ENCODE measurements at regions of chr19 and their contacts with region 1.

Region 1: DNA sequence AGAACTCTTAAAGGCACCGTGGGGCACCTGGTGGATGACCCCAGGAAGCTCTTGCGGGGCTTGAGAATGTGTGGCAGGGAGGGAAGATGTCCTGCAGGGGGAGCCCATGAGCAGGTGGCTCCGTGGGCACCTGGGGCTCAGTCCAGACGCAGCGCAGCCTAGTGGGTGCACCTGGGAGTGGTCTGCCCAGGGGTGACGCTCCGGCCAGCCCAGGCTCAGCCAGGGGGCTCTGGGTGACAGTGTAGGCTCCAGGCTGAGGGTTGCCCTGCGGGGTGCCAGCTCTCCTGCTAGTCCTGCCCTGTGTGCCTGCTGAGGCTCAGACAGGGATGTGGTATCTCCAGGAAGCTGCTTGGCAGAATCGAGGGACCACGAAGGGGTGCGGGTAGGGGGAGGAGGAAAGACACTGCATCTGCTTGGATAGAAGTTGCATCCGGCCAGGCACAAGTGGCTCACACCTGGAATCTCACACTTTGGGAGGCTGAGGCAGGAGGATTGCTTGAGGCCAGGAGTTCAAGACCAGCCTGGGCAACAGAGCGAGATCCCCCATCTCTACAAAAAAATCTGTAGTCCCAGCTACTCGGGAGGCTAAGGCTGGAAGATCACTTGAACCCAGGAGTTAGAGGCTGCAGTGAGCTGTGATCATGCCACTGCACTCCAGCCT is 15.0 kb upstream of the PGLS start:
- DNase-seq: peak; percentile 88
- ATAC-seq: peak; percentile 99
- H3K4me3 ChIP-seq: no peak overlapping the region
- H3K4me3 Mint-ChIP-seq: peak overlapping the region; percentile 16
- H3K27ac ChIP-seq: no peak overlapping the region
- H3K27ac Mint-ChIP-seq: no peak overlapping the region
- H3K4me1 ChIP-seq: peaks cover 7 to 21% of the 10 kb centered on the region in 2 donors
- H3K4me1 Mint-ChIP-seq: peaks cover 25% of the 10 kb centered on the region
- H3K27me3 ChIP-seq: no peaks in the 10 kb centered on the region
- H3K27me3 Mint-ChIP-seq: no peaks in the 10 kb centered on the region
- CTCF ChIP-seq: peak; percentile 97

Region 2: DNA sequence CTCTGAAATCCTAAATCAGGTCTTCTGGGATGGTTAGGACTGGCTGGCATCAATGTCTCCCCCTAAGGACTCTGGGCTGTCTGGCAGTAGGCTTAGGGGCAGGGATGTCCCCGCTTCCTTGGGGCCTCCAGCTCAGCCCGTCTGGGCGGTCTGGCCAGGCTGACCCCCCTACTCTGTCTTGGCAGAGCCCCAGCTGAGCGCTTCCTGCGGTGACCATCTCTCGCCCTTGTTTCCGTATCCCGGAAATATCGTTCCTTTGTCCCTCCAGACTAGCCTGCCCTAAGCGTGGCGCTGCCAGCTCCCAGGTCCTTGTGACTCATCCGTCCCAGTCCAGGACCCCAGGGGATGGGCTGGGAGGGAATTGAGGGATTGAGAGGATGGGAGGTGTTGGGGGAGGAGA is 147.8 kb before region 1 on chr19:
- CTCF ChIA-PET with region 1: no interaction called
- POLR2A ChIA-PET with region 1: no interaction called
- intact Hi-C with region 1: no loop called
- DNase-seq: no peak
- ATAC-seq: no peak
- H3K4me3 ChIP-seq: no peak overlapping the region
- H3K4me3 Mint-ChIP-seq: no peak overlapping the region
- H3K27ac ChIP-seq: no peak overlapping the region
- H3K27ac Mint-ChIP-seq: no peak overlapping the region
- H3K4me1 ChIP-seq: peaks cover 5 to 6% of the 10 kb centered on the region in 2 donors
- H3K4me1 Mint-ChIP-seq: peaks cover 6% of the 10 kb centered on the region
- H3K27me3 ChIP-seq: peaks cover 0 to 52% (median 16%) of the 10 kb centered on the region in 4 experiments
- H3K27me3 Mint-ChIP-seq: peaks cover 44% of the 10 kb centered on the region
- CTCF ChIP-seq: no peak

Region 3: GRCh38 chr19:17579661-17580244 is 83.3 kb after region 1 on chr19:
- CTCF ChIA-PET with region 1: interaction called, 79 read pairs
- POLR2A ChIA-PET with region 1: no interaction called
- intact Hi-C with region 1: loop called (anchors 1 kb)
- DNase-seq: peak; percentile 62
- ATAC-seq: peak; percentile 76
- H3K4me3 ChIP-seq: no peak overlapping the region
- H3K4me3 Mint-ChIP-seq: no peak overlapping the region
- H3K27ac ChIP-seq: no peak overlapping the region
- H3K27ac Mint-ChIP-seq: peak overlapping the region; percentile 24
- H3K4me1 ChIP-seq: peaks cover 0 to 5% of the 10 kb centered on the region in 2 donors
- H3K4me1 Mint-ChIP-seq: peaks cover 15% of the 10 kb centered on the region
- H3K27me3 ChIP-seq: no peaks in the 10 kb centered on the region
- H3K27me3 Mint-ChIP-seq: no peaks in the 10 kb centered on the region
- CTCF ChIP-seq: no peak